ENCODE measurements at regions of chr3 and their contacts with region 1.

Region 1: DNA sequence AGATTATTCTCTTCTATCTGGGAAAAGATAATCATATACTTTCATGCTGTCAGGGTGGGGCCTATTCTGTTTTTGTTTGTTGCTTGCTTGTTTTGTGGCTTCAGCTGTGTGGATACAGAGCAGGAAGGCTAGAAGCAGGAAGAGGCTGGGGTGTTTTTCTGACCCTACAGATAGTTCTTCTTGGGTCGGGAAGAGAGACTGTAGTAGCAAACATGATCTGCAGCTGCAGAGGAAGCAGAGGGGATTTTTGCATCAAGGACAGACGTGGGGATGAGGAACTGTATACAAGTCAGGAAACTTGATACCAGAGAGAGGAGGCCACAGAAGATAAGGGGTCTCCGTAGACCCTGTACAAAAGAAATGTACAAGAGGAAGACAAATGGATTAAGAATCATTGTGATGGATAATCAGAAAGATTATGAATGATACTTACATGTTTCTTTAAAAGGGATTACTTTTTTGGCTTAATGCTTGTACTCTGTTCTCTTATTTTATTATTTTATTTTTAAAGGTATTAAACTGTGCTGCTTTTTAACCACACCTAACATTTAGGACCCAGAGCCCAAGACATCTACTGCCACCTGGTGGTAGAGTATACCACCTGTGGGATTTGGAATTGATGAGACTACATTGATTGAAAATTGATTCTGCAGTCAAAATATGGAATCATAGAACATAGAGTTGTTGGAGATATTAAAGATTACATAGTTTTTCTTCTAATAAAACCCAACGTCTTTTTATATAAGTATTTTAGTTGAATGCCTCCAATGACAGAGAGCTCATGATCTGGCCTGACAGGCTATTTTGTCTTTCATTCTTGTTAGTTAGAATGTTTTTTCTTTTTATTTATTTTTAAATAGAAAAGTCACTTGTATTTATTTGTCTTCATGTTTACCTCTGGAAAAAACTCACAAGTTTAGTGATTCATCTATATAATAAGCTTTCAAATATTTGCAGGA is 87.3 kb upstream of the ROPN1 start:
- DNase-seq: no peak
- H3K4me3 ChIP-seq: no peak overlapping the region
- H3K27ac ChIP-seq: peak overlapping the region; percentile 16 to 21
- H3K4me1 ChIP-seq: peaks cover 0 to 4% of the 10 kb centered on the region in 2 donors
- H3K27me3 ChIP-seq: no peaks in the 10 kb centered on the region
- CTCF ChIP-seq: peak; percentile 69 to 85 (median 82)
- POLR2A ChIP-seq: no peak

Region 2: DNA sequence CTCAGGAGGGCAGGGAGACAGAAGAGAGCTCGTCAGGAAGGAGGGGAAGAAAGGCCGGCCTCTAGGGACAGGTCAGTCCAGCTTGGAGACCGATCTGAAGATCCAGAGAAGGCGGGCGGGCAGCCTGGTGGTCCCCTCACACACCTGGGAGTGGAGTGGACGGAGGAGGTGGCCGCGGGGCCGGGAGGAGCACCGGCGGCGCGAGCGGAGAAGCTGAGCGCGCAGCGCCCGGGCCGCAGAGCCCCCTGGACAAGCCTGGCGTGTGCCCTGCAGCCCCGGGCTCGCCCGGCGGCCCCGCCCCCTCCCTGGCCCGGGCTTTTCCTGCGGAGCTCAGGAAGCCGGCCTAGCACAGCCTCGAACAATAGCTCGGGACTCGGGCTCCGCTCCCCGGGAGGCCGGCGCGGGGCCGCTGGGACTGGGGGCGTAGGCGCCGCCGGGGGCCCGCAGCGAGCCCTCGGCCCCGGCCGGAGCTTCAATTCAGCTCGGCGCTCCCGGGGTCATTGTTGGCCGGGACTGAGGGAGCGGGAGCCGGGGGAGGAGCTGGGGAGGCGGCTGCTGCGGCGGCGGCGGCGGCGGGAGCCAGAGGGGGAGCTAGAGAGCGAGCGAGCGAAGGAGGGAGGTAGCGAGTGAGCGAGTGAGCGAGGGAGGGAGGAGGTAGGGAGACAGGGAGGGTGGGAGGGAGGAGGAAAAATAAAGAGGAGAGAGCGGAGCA is 46.4 kb before region 1 on chr3:
- intact Hi-C with region 1: loop called (anchors 5 kb)
- DNase-seq: peak; percentile 88 to 92
- H3K4me3 ChIP-seq: peak overlapping the region; percentile 58 to 73
- H3K27ac ChIP-seq: peak overlapping the region; percentile 86 to 90
- H3K4me1 ChIP-seq: no peaks in the 10 kb centered on the region
- H3K27me3 ChIP-seq: no peaks in the 10 kb centered on the region
- CTCF ChIP-seq: peak; percentile 70 to 94 (median 78)
- POLR2A ChIP-seq: peak; percentile 30 to 56

Measured in uterus (tissue), 4 donors.